ENCODE measurements at regions of chr14 and their contacts with region 1.

Region 1: DNA sequence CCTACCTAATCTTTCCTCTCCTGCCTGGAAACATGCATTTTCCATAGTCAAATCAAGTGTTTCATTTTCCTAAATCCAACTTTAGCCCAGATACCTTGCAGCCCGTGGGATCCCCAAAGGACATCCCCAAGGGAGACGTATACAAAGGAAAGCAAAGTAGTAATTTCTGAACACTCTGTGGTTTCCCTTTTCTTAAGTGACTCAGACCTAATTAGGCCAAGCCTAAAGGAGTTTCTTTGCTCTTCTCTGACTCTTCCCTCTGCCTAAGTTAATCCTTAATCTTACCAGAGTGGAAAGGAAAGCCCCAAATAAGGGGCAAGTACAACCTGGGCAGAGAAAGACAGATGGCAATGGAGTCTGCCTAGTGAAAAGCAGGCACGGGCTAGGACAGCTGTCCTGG is 250.3 kb downstream of the SPTSSA start:
- DNase-seq: no peak
- H3K4me3 Mint-ChIP-seq: peak overlapping the region; percentile 42
- H3K27ac Mint-ChIP-seq: peak overlapping the region; percentile 79
- H3K4me1 Mint-ChIP-seq: peaks cover 20% of the 10 kb centered on the region
- H3K27me3 Mint-ChIP-seq: peaks cover 17% of the 10 kb centered on the region

Region 2: GRCh38 chr14:33932576-33933345 is 279.0 kb before region 1 on chr14:
- intact Hi-C with region 1: no loop called
- DNase-seq: no peak
- H3K4me3 Mint-ChIP-seq: no peak overlapping the region
- H3K27ac Mint-ChIP-seq: no peak overlapping the region
- H3K4me1 Mint-ChIP-seq: peaks cover 25% of the 10 kb centered on the region
- H3K27me3 Mint-ChIP-seq: peaks cover 4% of the 10 kb centered on the region

Region 3: DNA sequence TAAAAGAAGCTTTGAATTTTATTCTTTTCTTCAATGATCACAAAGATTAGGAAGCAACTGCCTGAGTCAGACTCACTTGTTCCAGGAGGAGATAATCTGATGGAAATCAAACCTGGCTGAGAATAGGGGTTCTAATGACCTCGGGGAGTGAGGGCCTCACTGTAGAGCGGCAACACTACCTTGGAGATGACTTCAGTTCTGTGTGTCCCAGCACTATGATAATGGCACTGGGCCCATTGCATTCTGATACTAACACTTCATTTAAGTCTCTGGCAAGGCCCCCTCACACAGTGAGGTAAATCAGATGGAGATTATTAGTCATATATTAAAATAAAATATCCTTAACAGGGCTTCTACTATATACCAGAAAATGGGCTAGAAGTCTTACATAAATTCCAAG is 27.6 kb before region 1 on chr14:
- intact Hi-C with region 1: no loop called
- DNase-seq: no peak
- H3K4me3 Mint-ChIP-seq: no peak overlapping the region
- H3K27ac Mint-ChIP-seq: no peak overlapping the region
- H3K4me1 Mint-ChIP-seq: peaks cover 2% of the 10 kb centered on the region
- H3K27me3 Mint-ChIP-seq: no peaks in the 10 kb centered on the region

Region 4: GRCh38 chr14:34199564-34199963 is 12.2 kb before region 1 on chr14:
- intact Hi-C with region 1: loop called (anchors 1 kb)
- DNase-seq: peak; percentile 65
- H3K4me3 Mint-ChIP-seq: no peak overlapping the region
- H3K27ac Mint-ChIP-seq: peak overlapping the region; percentile 31
- H3K4me1 Mint-ChIP-seq: peaks cover 32% of the 10 kb centered on the region
- H3K27me3 Mint-ChIP-seq: peaks cover 8% of the 10 kb centered on the region